ENCODE measurements at regions of chr13 and their contacts with region 1.

Region 1: GRCh38 chr13:57629821-57630235 is 1.7 kb upstream of the PCDH17 start:
- DNase-seq: peak; percentile 97 to 100 (median 99)

Region 2: DNA sequence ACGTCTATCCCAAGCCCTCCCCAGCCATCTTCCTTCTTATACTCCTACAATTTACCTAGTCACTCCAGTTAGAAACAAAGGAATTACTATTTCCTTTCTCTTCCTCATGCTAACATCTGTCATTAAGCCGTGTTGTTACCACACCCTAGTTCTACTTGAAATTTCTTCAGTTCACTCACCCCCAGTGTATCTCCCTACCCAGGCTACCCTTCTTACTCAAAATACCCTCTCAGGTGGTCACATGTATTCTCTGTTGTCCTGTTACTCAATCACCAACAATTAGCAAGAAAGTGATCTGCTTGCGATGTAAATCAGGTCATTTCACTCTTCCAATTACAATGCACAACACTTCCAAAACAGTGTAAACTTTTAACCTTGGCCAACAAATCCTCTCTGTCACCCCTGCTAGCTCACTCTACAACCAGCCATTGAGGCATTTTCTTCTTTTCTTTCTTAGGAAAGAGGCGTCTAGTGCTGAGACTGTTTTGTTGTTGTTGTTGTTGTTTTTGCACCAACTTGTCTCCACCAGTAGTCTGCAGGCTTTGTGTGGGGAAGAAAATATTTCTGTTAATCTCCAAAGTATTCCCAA is 52.4 kb after region 1 on chr13:
- intact Hi-C with region 1: no loop called
- DNase-seq: no peak

Region 3: GRCh38 chr13:57739089-57739488 is 109.3 kb after region 1 on chr13:
- intact Hi-C with region 1: loop called (anchors 10 kb)
- DNase-seq: no peak

Region 4: GRCh38 chr13:57857945-57858344 is 228.1 kb after region 1 on chr13:
- intact Hi-C with region 1: loop called (anchors 2 kb)
- DNase-seq: no peak